CD4-positive, alpha-beta T cell (primary cell): ENCODE measurements at regions of chr4 and their contacts with region 1.

Region 1: GRCh38 chr4:158810487-158811215 is 41.8 kb downstream of the FNIP2 start:
- DNase-seq: peak in 2 of 14 experiments; percentile 40 to 47
- ATAC-seq: no peak
- H3K4me3 ChIP-seq: no peak overlapping the region
- H3K4me3 Mint-ChIP-seq: peak overlapping the region; percentile 84
- H3K27ac ChIP-seq: peak overlapping the region in 1 of 2 donors; percentile 64
- H3K27ac Mint-ChIP-seq: peak overlapping the region; percentile 52
- H3K4me1 ChIP-seq: peaks cover 14% of the 10 kb centered on the region
- H3K4me1 Mint-ChIP-seq: peaks cover 46% of the 10 kb centered on the region
- H3K27me3 ChIP-seq: no peaks in the 10 kb centered on the region
- H3K27me3 Mint-ChIP-seq: no peaks in the 10 kb centered on the region
- CTCF ChIP-seq: no peak

Region 2: DNA sequence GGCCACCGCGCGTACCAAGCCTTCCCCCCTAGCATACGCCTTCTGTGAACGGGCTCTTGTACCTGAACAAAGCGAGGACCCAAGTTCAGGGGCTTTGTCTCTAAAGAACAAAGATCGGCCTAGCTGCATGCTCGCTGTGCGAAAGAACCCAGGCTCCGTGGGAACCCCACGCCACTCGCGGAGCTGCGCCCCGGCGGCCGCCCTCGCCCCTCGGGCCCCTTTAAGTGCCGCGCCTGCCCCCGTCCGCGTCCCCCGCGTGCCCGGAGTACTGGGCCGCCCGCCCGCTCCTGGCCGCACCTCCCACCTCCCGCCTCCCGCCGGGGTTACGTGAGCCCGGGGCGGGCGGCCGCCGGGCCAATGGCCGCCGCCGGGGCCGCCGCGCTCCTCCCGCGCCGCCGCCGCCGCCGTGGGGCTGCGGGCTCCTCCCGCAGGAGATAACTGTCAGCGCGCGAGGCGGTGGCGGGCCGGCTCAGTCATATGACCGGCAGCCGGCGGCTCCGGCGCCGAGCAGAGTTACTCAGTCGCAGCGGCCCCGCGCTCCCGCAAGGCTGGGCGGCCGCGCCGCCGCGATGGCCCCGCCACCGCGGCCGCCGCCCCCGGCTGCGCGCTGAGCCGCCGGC is 42.0 kb before region 1 on chr4 and contains the start of gene FNIP2:
- CTCF ChIA-PET with region 1: no interaction called
- POLR2A ChIA-PET with region 1: interaction called, 8 read pairs
- intact Hi-C with region 1: loop called in 1 of 2 experiments (anchors 1 kb)
- DNase-seq: peak; percentile 39 to 90 (median 66)
- ATAC-seq: peak; percentile 78
- H3K4me3 ChIP-seq: peak within 1 kb of the TSS; percentile 69
- H3K4me3 Mint-ChIP-seq: peak within 1 kb of the TSS; percentile 98
- H3K27ac ChIP-seq: peak within 1 kb of the TSS; percentile 32 to 62
- H3K27ac Mint-ChIP-seq: peak within 1 kb of the TSS; percentile 91
- H3K4me1 ChIP-seq: peaks cover 10% of the 10 kb centered on the region
- H3K4me1 Mint-ChIP-seq: peaks cover 42% of the 10 kb centered on the region
- H3K27me3 ChIP-seq: no peaks in the 10 kb centered on the region
- H3K27me3 Mint-ChIP-seq: no peaks in the 10 kb centered on the region
- CTCF ChIP-seq: no peak
- total RNA-seq, gene FNIP2: 7.5 to 7.7 TPM